SK-N-SH (cell line): ENCODE measurements at regions of chr7 and their contacts with region 1.

Region 1: GRCh38 chr7:141262101-141263090 is 188.5 kb downstream of the TMEM178B start:
- DNase-seq: peak; percentile 26
- H3K4me3 ChIP-seq: no peak overlapping the region
- H3K27ac ChIP-seq: no peak overlapping the region
- H3K4me1 ChIP-seq: no peaks in the 10 kb centered on the region
- H3K27me3 ChIP-seq: no peaks in the 10 kb centered on the region
- CTCF ChIP-seq: 0 out of 2 replicates have a peak, but pooled peaks have one; percentile 11
- EP300 ChIP-seq: no peak
- RAD21 ChIP-seq: peak; percentile 51

Region 2: DNA sequence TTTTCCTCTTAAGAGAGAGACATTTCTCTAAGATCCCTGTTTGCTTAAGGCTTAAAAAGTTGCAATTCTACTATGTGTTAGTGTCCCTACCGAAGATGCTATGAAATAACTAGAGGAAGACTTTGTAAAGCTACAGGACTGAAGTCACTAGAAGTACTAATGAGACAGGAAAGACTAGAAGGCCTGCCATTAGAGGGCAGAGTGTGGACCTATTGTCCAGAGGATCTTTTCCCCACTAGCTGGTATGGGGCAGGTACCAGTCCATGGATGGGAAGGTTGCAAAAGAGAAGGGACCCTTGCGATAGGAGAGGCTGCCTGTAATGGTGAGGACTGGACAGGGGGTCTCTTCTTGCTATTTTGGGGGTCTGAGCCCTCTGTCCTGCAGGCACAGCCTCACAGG is 10.4 kb before region 1 on chr7:
- CTCF ChIA-PET with region 1: interaction called, 17 read pairs
- POLR2A ChIA-PET with region 1: no interaction called
- DNase-seq: no peak
- H3K4me3 ChIP-seq: no peak overlapping the region
- H3K27ac ChIP-seq: no peak overlapping the region
- H3K4me1 ChIP-seq: no peaks in the 10 kb centered on the region
- H3K27me3 ChIP-seq: no peaks in the 10 kb centered on the region
- CTCF ChIP-seq: no peak
- EP300 ChIP-seq: no peak
- RAD21 ChIP-seq: no peak

Region 3: GRCh38 chr7:141362580-141363435 is 100.4 kb after region 1 on chr7:
- CTCF ChIA-PET with region 1: no interaction called
- POLR2A ChIA-PET with region 1: no interaction called
- DNase-seq: peak; percentile 32
- H3K4me3 ChIP-seq: no peak overlapping the region
- H3K27ac ChIP-seq: peak overlapping the region in 1 of 2 experiments; percentile 76; a peak in 2 of 4 replicates
- H3K4me1 ChIP-seq: peaks cover 0 to 35% of the 10 kb centered on the region in 2 experiments; a peak in 2 of 4 replicates
- H3K27me3 ChIP-seq: no peaks in the 10 kb centered on the region
- CTCF ChIP-seq: no peak
- EP300 ChIP-seq: no peak
- RAD21 ChIP-seq: no peak; the same call in 1 of the 2 replicates

Region 4: DNA sequence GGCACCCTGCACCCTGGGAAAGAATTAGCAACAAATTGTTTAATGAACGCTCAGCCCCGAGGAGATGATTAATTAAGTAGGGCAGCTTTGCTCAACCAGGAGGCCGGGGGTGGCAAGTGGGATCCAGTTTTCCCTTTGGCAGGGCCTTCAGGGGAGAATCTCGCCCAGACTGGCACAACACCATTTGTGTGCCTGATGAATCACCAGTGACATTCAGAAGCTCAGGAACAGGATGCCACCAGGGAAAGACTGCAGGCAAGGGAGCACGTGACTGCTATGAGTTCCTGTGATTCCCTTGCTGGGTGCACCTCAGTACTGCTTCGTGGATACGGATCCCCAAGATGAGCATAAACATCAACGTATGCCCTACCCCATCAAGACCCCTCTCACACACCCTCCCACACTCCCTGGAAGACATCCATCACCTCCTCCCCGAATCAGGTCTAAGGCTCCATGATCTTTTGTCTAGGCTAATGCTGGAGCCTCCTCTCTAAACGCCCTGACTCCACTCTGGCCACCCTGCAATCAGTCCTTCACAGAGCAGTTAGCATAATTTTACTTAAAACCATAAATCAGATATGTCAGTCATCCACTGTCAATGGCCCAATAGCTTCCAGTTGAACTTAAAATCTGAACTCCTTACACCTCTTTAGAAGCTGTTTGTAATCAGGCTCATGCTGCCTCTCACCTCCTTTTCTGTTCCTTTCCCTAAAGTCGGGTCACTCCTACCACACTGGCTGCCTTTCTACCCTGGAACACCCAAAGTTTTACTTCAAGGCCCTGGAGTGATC is 179.6 kb after region 1 on chr7:
- CTCF ChIA-PET with region 1: no interaction called
- POLR2A ChIA-PET with region 1: no interaction called
- DNase-seq: no peak
- H3K4me3 ChIP-seq: no peak overlapping the region; a peak in 1 of 4 replicates
- H3K27ac ChIP-seq: no peak overlapping the region
- H3K4me1 ChIP-seq: no peaks in the 10 kb centered on the region
- H3K27me3 ChIP-seq: no peaks in the 10 kb centered on the region
- CTCF ChIP-seq: no peak
- EP300 ChIP-seq: no peak
- RAD21 ChIP-seq: no peak